GM23248 (cell line): ENCODE measurements at regions of chrX and their contacts with region 1.

Region 1: GRCh38 chrX:70096052-70096451 is 33.8 kb downstream of the OTUD6A start:
- DNase-seq: peak; percentile 16
- H3K4me3 ChIP-seq: no peak overlapping the region
- H3K27ac ChIP-seq: no peak overlapping the region
- H3K4me1 ChIP-seq: no peaks in the 10 kb centered on the region
- H3K27me3 ChIP-seq: no peaks in the 10 kb centered on the region

Region 2: DNA sequence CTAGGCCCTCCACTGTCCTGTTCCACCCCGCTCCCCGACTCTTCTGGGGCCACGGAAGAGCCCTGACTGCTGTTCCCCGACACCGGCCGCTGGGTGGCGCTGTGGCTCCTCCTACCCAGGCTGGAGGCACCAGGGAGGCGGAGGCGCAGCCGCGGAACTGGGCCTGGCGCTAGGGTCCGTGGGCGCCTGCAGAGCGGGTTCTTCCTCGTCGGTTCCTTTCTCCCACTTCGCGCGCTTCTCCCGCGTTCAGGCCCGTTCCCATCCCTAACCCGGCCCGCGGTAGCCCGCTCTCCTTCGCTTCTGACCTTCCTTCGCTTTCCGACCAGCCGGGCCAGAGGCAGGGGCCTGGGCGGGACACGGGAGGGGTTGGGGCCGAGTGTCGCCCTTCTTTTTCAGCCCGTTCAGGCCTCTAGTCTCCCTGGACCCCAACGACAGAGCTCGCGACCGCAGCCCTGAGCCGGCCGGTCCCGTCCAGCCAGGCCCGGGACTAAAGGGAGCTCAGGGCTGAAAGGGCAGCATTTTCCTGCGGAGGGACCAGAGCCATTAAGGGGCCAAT is 557.7 kb before region 1 on chrX:
- in situ Hi-C with region 1: loop called (anchors 25 kb)
- DNase-seq: peak; percentile 64
- H3K4me3 ChIP-seq: peak overlapping the region; percentile 68
- H3K27ac ChIP-seq: no peak overlapping the region
- H3K4me1 ChIP-seq: no peaks in the 10 kb centered on the region
- H3K27me3 ChIP-seq: no peaks in the 10 kb centered on the region

Region 3: GRCh38 chrX:70030301-70030767 is 65.7 kb before region 1 on chrX:
- in situ Hi-C with region 1: loop called (anchors 10 kb)
- DNase-seq: peak; percentile 71
- H3K4me3 ChIP-seq: no peak overlapping the region
- H3K27ac ChIP-seq: no peak overlapping the region
- H3K4me1 ChIP-seq: no peaks in the 10 kb centered on the region
- H3K27me3 ChIP-seq: no peaks in the 10 kb centered on the region